A549 (cell line): ENCODE measurements at regions of chr10 and their contacts with region 1.

Region 1: GRCh38 chr10:102583435-102584417 is 60.6 kb upstream of the TRIM8 start:
- DNase-seq: peak; percentile 87 to 95
- ATAC-seq: peak; percentile 98 to 99
- H3K4me3 ChIP-seq: no peak overlapping the region
- H3K27ac ChIP-seq: no peak overlapping the region
- H3K4me1 ChIP-seq: no peaks in the 10 kb centered on the region
- CTCF ChIP-seq: peak; percentile 85
- EP300 ChIP-seq: no peak
- POLR2A ChIP-seq: no peak
- RAD21 ChIP-seq: peak; percentile 85 to 90

Region 2: GRCh38 chr10:102394079-102394800 is 189.5 kb before region 1 on chr10:
- CTCF ChIA-PET with region 1: interaction called, 13 read pairs
- POLR2A ChIA-PET with region 1: interaction called, 3 read pairs
- DNase-seq: peak; percentile 95 to 98
- ATAC-seq: peak; percentile 82 to 90
- H3K4me3 ChIP-seq: peak overlapping the region; percentile 56
- H3K27ac ChIP-seq: peak overlapping the region; percentile 68 to 91
- H3K4me1 ChIP-seq: peaks cover 22% of the 10 kb centered on the region; the same call in 2 of the 3 replicates
- CTCF ChIP-seq: peak; percentile 96
- EP300 ChIP-seq: no peak; a peak in 1 of 5 replicates
- POLR2A ChIP-seq: no peak
- RAD21 ChIP-seq: peak in 1 of 2 experiments; percentile 85; a peak in 4 of 5 replicates

Region 3: DNA sequence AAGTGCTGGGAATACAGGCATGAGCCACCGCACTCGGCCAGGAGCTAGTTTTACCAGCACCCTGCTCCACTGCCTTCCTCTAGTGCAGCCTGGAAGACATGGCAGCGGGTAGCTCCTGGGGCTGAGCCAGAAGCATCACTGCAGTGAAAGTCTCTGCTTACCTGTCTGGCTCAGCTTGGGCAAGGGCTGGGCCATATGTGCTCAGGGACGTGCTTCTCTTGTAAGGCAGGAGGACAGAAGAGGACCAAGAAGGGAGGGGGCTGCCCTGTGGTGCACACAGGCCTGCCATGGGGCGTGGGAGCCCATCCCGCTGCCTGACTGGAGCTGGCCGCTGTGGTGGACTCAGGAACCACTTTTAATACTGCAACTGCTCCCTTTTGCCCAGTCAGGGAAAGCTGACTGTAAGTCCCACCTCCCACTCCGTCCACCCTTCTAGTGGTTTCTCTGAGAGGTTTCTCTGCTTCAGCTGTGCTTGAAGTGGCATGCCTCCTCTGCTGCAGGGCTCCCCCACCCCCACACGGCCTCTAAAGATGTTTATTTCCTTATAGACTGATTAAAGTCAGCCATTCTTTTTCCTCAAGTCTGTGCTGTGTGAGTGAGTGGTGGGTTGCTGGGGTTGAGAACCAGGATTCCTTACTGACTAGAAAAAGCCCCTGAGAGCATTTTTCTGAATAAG is 107.1 kb before region 1 on chr10:
- CTCF ChIA-PET with region 1: interaction called, 12 read pairs
- POLR2A ChIA-PET with region 1: interaction called, 3 read pairs
- DNase-seq: no peak
- ATAC-seq: no peak
- H3K4me3 ChIP-seq: no peak overlapping the region
- H3K27ac ChIP-seq: no peak overlapping the region
- H3K4me1 ChIP-seq: no peaks in the 10 kb centered on the region
- CTCF ChIP-seq: no peak
- EP300 ChIP-seq: no peak
- POLR2A ChIP-seq: no peak
- RAD21 ChIP-seq: no peak

Region 4: GRCh38 chr10:102503281-102504220 is 80.2 kb before region 1 on chr10 and contains the start of gene SUFU:
- CTCF ChIA-PET with region 1: interaction called, 87 read pairs
- POLR2A ChIA-PET with region 1: interaction called, 14 read pairs
- DNase-seq: peak; percentile 88 to 99
- ATAC-seq: peak; percentile 64 to 79
- H3K4me3 ChIP-seq: peak within 1 kb of the TSS; percentile 82
- H3K27ac ChIP-seq: peak within 1 kb of the TSS; percentile 87 to 95
- H3K4me1 ChIP-seq: peaks cover 17% of the 10 kb centered on the region; the same call in 2 of the 3 replicates
- CTCF ChIP-seq: peak; percentile 88
- EP300 ChIP-seq: no peak
- POLR2A ChIP-seq: peak; percentile 96
- RAD21 ChIP-seq: peak; percentile 75 to 78
- polyA plus RNA-seq, gene SUFU: 3.7 and 4.5 TPM in 2 replicates

Region 5: DNA sequence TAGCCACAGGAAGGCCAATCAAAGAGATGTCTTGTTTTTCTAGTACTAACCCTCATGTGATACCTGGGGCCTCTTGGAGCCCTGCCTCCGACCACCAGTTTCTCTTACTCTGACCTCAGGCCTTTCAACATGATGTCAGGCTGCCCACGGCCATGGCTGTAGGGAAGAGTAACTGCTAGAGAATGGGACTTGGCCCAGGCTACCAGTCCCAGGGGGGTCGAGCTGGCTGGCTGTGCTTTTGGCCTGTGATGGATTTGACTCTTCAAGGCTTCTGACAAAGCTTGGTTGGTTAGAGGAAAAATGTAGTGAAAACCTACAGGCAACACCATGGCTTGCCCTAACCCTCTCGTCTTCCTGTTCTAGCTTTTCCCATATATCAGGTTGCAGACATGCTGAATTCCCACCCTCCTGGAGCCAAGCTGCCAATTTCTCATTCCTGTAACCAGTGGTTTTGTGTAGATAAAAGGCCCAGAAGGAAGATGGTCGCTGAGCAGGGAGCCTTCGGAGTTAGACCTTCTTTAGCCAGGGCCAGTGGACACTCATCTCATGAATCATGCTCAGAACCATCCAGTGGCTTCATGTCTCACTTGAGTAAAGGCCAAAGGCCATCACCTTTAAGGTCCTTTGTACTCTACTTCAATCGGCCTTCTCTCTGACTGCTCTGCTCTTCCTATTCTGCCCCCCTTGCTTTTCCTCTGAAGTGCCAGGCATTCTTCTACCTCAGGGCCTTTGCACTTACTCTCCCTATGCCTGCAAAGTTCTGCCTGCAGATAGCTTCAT is 60.3 kb before region 1 on chr10:
- CTCF ChIA-PET with region 1: interaction called, 10 read pairs
- POLR2A ChIA-PET with region 1: no interaction called
- DNase-seq: no peak
- ATAC-seq: no peak
- H3K4me3 ChIP-seq: no peak overlapping the region
- H3K27ac ChIP-seq: no peak overlapping the region
- H3K4me1 ChIP-seq: no peaks in the 10 kb centered on the region
- CTCF ChIP-seq: no peak
- EP300 ChIP-seq: no peak
- POLR2A ChIP-seq: no peak
- RAD21 ChIP-seq: no peak

Region 6: GRCh38 chr10:102565793-102566192 is 17.9 kb before region 1 on chr10:
- CTCF ChIA-PET with region 1: interaction called, 28 read pairs
- POLR2A ChIA-PET with region 1: no interaction called
- DNase-seq: no peak
- ATAC-seq: no peak
- H3K4me3 ChIP-seq: no peak overlapping the region
- H3K27ac ChIP-seq: no peak overlapping the region
- H3K4me1 ChIP-seq: no peaks in the 10 kb centered on the region
- CTCF ChIP-seq: no peak
- EP300 ChIP-seq: no peak
- POLR2A ChIP-seq: no peak
- RAD21 ChIP-seq: no peak

Region 7: GRCh38 chr10:102604379-102604960 is 20.7 kb after region 1 on chr10:
- CTCF ChIA-PET with region 1: interaction called, 60 read pairs
- POLR2A ChIA-PET with region 1: no interaction called
- DNase-seq: peak; percentile 76 to 86
- ATAC-seq: peak; percentile 85 to 89
- H3K4me3 ChIP-seq: peak overlapping the region; percentile 9; the same call in 1 of the 3 replicates
- H3K27ac ChIP-seq: peak overlapping the region; percentile 70 to 89
- H3K4me1 ChIP-seq: peaks cover 29% of the 10 kb centered on the region
- CTCF ChIP-seq: no peak
- EP300 ChIP-seq: peak in 1 of 2 experiments; percentile 38; a peak in 1 of 5 replicates
- POLR2A ChIP-seq: no peak
- RAD21 ChIP-seq: no peak

Region 8: DNA sequence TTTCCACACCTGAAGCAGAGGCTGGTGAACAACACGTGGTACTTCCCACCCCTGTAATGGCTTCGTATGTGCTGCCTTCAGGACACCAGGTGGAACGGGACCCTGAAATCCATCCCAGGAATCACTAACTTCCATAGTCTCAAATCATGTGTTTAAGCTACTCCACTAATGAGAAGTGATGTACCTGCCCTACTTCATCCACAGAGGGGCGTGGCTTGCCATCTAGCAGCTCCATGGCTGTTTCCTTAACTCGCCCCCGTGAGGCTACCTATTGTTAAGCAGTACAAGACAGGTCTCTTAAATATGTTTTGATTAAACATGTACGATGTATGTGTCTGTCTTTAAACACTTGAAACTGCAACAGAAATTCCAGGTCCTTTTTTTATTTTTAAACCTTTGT is 98.7 kb after region 1 on chr10:
- CTCF ChIA-PET with region 1: no interaction called
- POLR2A ChIA-PET with region 1: no interaction called
- DNase-seq: no peak
- ATAC-seq: no peak
- H3K4me3 ChIP-seq: no peak overlapping the region
- H3K27ac ChIP-seq: no peak overlapping the region
- H3K4me1 ChIP-seq: 0 out of 3 replicates have a peak, but pooled peaks cover 4% of the 10 kb centered on the region
- CTCF ChIP-seq: no peak
- EP300 ChIP-seq: no peak
- POLR2A ChIP-seq: no peak
- RAD21 ChIP-seq: no peak

Region 9: GRCh38 chr10:103793920-103794883 is 1210.5 kb after region 1 on chr10:
- CTCF ChIA-PET with region 1: no interaction called
- POLR2A ChIA-PET with region 1: no interaction called
- DNase-seq: peak; percentile 65 to 95
- ATAC-seq: peak; percentile 91 to 96
- H3K4me3 ChIP-seq: no peak overlapping the region
- H3K27ac ChIP-seq: peak overlapping the region; percentile 82 to 86
- H3K4me1 ChIP-seq: peaks cover 59% of the 10 kb centered on the region
- CTCF ChIP-seq: no peak
- EP300 ChIP-seq: peak; percentile 72 to 74; a peak in 2 of 5 replicates
- POLR2A ChIP-seq: no peak
- RAD21 ChIP-seq: peak; percentile 2 to 59; a peak in 2 of 5 replicates